Adrenal gland (tissue), 19 donors: ENCODE measurements at regions of chr6 and their contacts with region 1.

Region 1: GRCh38 chr6:15254070-15254841 is 8.4 kb downstream of the JARID2 start:
- DNase-seq: no peak
- H3K4me3 ChIP-seq: no peak overlapping the region
- H3K27ac ChIP-seq: peak overlapping the region in 1 of 5 donors; percentile 1
- H3K4me1 ChIP-seq: peaks cover 19 to 56% of the 10 kb centered on the region in 2 donors
- H3K27me3 ChIP-seq: no peaks in the 10 kb centered on the region
- CTCF ChIP-seq: no peak
- POLR2A ChIP-seq: no peak

Region 2: GRCh38 chr6:15479761-15480160 is 225.5 kb after region 1 on chr6:
- intact Hi-C with region 1: loop called in 1 of 2 experiments (anchors 10 kb)
- DNase-seq: peak in 6 of 7 donors; percentile 59 to 82 (median 68)
- H3K4me3 ChIP-seq: no peak overlapping the region
- H3K27ac ChIP-seq: no peak overlapping the region
- H3K4me1 ChIP-seq: peaks cover 0 to 30% of the 10 kb centered on the region in 2 donors
- H3K27me3 ChIP-seq: no peaks in the 10 kb centered on the region
- CTCF ChIP-seq: no peak
- POLR2A ChIP-seq: no peak